CD4-positive, alpha-beta T cell (primary cell): ENCODE measurements at regions of chr1 and their contacts with region 1.

Region 1: GRCh38 chr1:234599617-234600417 is 10.2 kb downstream of the IRF2BP2 start:
- DNase-seq: peak; percentile 28 to 94 (median 66)
- ATAC-seq: peak; percentile 62
- H3K4me3 ChIP-seq: peak overlapping the region; percentile 65
- H3K4me3 Mint-ChIP-seq: peak overlapping the region; percentile 90
- H3K27ac ChIP-seq: peak overlapping the region; percentile 81 to 95
- H3K27ac Mint-ChIP-seq: peak overlapping the region; percentile 98
- H3K4me1 ChIP-seq: peaks cover 45% of the 10 kb centered on the region
- H3K4me1 Mint-ChIP-seq: peaks cover 61% of the 10 kb centered on the region
- H3K27me3 ChIP-seq: no peaks in the 10 kb centered on the region
- H3K27me3 Mint-ChIP-seq: no peaks in the 10 kb centered on the region
- CTCF ChIP-seq: no peak

Region 2: GRCh38 chr1:234691567-234691966 is 91.8 kb after region 1 on chr1:
- CTCF ChIA-PET with region 1: interaction called, 3 read pairs
- POLR2A ChIA-PET with region 1: no interaction called
- intact Hi-C with region 1: loop called in 1 of 2 experiments (anchors 5 kb)
- DNase-seq: peak in 3 of 14 experiments; percentile 19 to 53 (median 50)
- ATAC-seq: peak; percentile 76
- H3K4me3 ChIP-seq: no peak overlapping the region
- H3K4me3 Mint-ChIP-seq: no peak overlapping the region
- H3K27ac ChIP-seq: no peak overlapping the region
- H3K27ac Mint-ChIP-seq: no peak overlapping the region
- H3K4me1 ChIP-seq: no peaks in the 10 kb centered on the region
- H3K4me1 Mint-ChIP-seq: peaks cover 5% of the 10 kb centered on the region
- H3K27me3 ChIP-seq: no peaks in the 10 kb centered on the region
- H3K27me3 Mint-ChIP-seq: no peaks in the 10 kb centered on the region
- CTCF ChIP-seq: peak; percentile 35

Region 3: DNA sequence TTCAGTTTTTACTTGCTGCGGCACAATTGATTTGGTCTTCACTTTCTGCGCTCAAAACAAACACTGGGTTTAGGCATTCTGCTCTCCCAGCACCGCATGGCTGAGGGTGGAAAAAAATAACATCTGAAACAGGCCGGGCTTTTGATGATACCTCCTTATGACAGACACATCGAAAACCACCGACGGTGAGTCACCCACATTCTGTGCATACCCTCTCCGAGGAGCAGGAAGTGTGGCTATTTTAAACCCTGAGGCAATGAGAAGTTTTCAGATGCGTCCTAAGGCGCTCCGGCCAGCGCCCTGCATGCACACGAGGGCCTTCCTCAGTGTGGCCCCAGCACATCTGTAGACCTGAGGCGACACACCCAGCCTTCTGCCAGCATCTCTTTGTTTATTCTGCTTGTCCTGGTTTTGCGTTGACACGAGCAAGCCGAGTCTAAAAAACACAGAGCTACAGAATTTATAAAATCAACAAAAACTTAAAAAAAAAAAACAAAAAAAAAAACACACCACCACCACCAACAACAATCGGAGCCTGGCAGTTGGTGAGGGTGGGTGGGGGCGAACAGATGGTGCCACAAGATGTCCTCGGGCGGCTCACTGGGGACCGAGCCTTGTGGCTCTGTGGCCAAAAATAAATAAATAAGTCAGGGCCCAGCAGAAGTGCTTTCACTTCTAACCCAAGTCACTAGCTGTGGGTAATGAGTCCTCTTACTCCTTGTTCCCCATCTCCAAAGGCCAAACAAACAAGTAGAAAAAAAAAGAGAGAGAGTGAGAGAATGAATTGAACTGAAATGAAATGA is 172.7 kb after region 1 on chr1:
- CTCF ChIA-PET with region 1: interaction called, 3 read pairs
- POLR2A ChIA-PET with region 1: no interaction called
- intact Hi-C with region 1: loop called in 1 of 2 experiments (anchors 5 kb)
- DNase-seq: peak; percentile 56 to 95 (median 78)
- ATAC-seq: peak; percentile 82
- H3K4me3 ChIP-seq: peak overlapping the region; percentile 21
- H3K4me3 Mint-ChIP-seq: peak overlapping the region; percentile 42
- H3K27ac ChIP-seq: peak overlapping the region; percentile 59 to 72
- H3K27ac Mint-ChIP-seq: peak overlapping the region; percentile 87
- H3K4me1 ChIP-seq: peaks cover 53% of the 10 kb centered on the region
- H3K4me1 Mint-ChIP-seq: peaks cover 56% of the 10 kb centered on the region
- H3K27me3 ChIP-seq: peaks cover 4 to 12% of the 10 kb centered on the region in 2 experiments
- H3K27me3 Mint-ChIP-seq: no peaks in the 10 kb centered on the region
- CTCF ChIP-seq: no peak

Region 4: GRCh38 chr1:235011599-235012435 is 412.0 kb after region 1 on chr1:
- CTCF ChIA-PET with region 1: interaction called, 4 read pairs
- POLR2A ChIA-PET with region 1: interaction called, 12 read pairs
- intact Hi-C with region 1: loop called in 1 of 2 experiments (anchors 5 kb)
- DNase-seq: peak; percentile 81 to 100 (median 90)
- ATAC-seq: peak; percentile 91
- H3K4me3 ChIP-seq: peak overlapping the region; percentile 38
- H3K4me3 Mint-ChIP-seq: peak overlapping the region; percentile 58
- H3K27ac ChIP-seq: peak overlapping the region; percentile 88 to 89
- H3K27ac Mint-ChIP-seq: peak overlapping the region; percentile 86
- H3K4me1 ChIP-seq: peaks cover 52% of the 10 kb centered on the region
- H3K4me1 Mint-ChIP-seq: peaks cover 69% of the 10 kb centered on the region
- H3K27me3 ChIP-seq: no peaks in the 10 kb centered on the region
- H3K27me3 Mint-ChIP-seq: no peaks in the 10 kb centered on the region
- CTCF ChIP-seq: no peak

Region 5: DNA sequence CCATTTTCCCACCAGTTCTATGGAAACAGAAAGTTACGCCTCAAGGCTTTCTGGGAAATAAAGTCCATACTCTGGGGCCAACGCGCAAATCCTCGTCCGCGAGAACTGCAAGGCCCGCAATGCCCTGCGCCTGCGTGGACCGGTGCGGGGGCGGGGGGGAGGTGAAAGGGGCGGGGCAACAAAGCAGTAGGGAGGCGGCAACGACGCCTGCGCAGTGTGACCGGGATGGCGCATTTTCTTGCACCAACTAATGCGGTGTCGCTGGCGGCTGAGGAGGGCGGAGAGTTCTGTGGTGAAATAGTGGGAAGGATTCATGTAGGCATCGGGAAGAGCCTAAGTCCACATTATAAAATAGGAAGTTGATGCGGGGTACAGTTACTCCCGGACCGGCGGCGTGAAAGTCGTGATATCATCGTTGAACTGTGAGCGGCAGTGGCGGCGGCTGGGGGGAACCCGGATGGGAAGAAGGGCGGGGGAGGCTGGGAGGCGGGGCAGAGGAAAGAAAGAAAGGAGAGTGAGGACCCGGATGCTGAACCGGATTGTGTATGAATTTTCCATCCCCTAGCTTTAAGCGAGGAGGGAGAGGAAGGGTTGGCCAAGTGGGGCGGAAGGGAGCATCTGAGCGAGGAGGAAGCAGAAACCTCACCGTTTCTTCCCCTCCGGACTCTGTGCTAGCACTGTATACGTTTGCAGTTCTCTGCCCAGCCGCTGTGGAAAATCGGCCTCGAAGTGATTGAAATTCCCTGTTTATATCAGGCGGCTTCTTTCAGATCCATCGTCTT is 728.7 kb after region 1 on chr1 and contains the start of gene GGPS1:
- CTCF ChIA-PET with region 1: no interaction called
- POLR2A ChIA-PET with region 1: interaction called, 4 read pairs
- intact Hi-C with region 1: loop called in 1 of 2 experiments (anchors 10 kb)
- DNase-seq: peak; percentile 96 to 100 (median 99)
- ATAC-seq: peak; percentile 78
- H3K4me3 ChIP-seq: peak within 1 kb of the TSS; percentile 97
- H3K4me3 Mint-ChIP-seq: no peak within 1 kb of the TSS
- H3K27ac ChIP-seq: peak within 1 kb of the TSS; percentile 96 to 98
- H3K27ac Mint-ChIP-seq: no peak within 1 kb of the TSS
- H3K4me1 ChIP-seq: peaks cover 16% of the 10 kb centered on the region
- H3K4me1 Mint-ChIP-seq: peaks cover 23% of the 10 kb centered on the region
- H3K27me3 ChIP-seq: no peaks in the 10 kb centered on the region
- H3K27me3 Mint-ChIP-seq: no peaks in the 10 kb centered on the region
- CTCF ChIP-seq: peak; percentile 34
- total RNA-seq, gene GGPS1: 20.6 to 20.9 TPM